CD4-positive, alpha-beta T cell (primary cell): ENCODE measurements at regions of chr13 and their contacts with region 1.

Region 1: GRCh38 chr13:110225609-110226562 is 81.1 kb downstream of the COL4A1 start:
- DNase-seq: no peak
- ATAC-seq: no peak
- H3K4me3 ChIP-seq: no peak overlapping the region
- H3K4me3 Mint-ChIP-seq: no peak overlapping the region
- H3K27ac ChIP-seq: no peak overlapping the region
- H3K27ac Mint-ChIP-seq: no peak overlapping the region
- H3K4me1 ChIP-seq: no peaks in the 10 kb centered on the region
- H3K4me1 Mint-ChIP-seq: no peaks in the 10 kb centered on the region
- H3K27me3 ChIP-seq: peaks cover 0 to 3% of the 10 kb centered on the region in 2 experiments
- H3K27me3 Mint-ChIP-seq: peaks cover 18% of the 10 kb centered on the region
- CTCF ChIP-seq: no peak

Region 2: DNA sequence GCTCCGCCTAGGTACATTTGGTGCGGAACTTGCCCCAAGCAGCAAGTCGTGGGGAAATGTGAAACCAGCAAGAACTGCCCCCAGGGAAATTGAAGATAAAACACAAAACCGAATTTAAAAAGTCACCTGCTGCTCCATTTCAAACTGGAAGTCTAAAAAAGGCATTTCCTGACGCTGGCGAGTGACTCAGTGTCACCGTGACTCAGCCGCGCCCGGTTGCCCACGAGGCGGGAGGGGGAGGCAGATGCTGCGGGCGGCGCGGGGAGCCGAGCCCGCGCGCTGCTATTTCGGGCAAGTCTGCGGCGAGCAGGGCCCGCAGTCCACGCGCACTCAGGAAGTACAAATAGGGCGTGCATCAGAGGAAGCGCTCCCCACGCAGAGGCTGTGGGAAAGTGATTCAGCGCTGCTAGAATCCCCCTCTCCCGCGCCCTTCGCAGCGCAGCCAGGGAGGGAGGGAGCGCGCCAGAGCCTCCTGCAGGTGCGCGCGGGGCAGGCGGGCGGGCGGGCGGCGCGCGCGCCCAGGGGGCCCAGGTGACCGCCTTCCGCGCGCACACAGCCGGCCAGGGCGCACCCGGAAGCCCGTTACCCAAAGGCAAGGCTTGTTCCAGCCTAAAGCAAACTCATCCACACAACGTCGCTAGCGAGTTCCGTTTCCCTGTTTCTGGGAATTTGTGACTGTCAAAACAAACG is 87.7 kb before region 1 on chr13:
- CTCF ChIA-PET with region 1: no interaction called
- POLR2A ChIA-PET with region 1: no interaction called
- intact Hi-C with region 1: no loop called
- DNase-seq: peak in 11 of 14 experiments; percentile 12 to 79 (median 38)
- ATAC-seq: peak; percentile 66
- H3K4me3 ChIP-seq: peak overlapping the region; percentile 47
- H3K4me3 Mint-ChIP-seq: peak overlapping the region; percentile 77
- H3K27ac ChIP-seq: no peak overlapping the region
- H3K27ac Mint-ChIP-seq: no peak overlapping the region
- H3K4me1 ChIP-seq: peaks cover 18% of the 10 kb centered on the region
- H3K4me1 Mint-ChIP-seq: peaks cover 12% of the 10 kb centered on the region
- H3K27me3 ChIP-seq: peaks cover 13 to 24% of the 10 kb centered on the region in 2 experiments
- H3K27me3 Mint-ChIP-seq: peaks cover 45% of the 10 kb centered on the region
- CTCF ChIP-seq: no peak

Region 3: DNA sequence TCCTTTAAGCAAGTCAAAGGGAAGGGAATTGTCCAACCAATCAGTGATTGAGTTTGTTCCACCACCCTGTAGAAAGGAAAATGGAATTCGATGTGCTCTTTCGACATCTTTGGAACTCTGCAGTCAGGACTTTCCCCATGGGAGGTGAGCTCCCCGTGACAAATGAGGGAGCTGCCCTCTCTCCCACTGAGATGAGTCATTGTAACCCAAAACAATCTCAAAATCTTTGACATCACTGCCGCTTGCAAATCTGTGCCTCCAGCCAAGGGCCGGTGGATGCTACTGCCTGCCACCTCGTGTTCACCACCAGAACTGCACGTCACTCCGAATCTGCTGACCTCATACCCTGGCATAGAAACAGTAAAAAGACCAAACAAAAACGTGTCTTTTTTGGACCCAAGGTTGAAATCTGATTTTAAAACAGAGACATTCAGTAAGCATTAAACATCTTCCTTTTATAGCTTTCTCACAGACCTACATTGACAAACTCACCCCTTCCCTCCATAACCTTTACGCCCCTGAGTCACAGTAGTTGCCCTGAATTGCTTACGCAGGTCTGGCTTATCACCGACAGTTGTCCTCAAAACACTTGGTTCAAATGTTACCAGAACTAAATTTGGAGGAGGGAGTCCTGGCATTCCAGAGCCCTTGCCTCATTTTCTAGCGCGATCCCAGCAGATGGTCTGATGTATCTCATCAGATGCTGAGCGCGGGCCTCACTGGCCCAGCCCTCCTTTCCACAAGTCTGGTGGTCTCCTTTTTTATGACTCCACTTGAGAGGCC is 186.4 kb after region 1 on chr13:
- CTCF ChIA-PET with region 1: no interaction called
- POLR2A ChIA-PET with region 1: no interaction called
- intact Hi-C with region 1: loop called (anchors 1 kb)
- DNase-seq: peak; percentile 21 to 73 (median 44)
- ATAC-seq: peak; percentile 54
- H3K4me3 ChIP-seq: no peak overlapping the region
- H3K4me3 Mint-ChIP-seq: no peak overlapping the region
- H3K27ac ChIP-seq: no peak overlapping the region
- H3K27ac Mint-ChIP-seq: no peak overlapping the region
- H3K4me1 ChIP-seq: peaks cover 5% of the 10 kb centered on the region
- H3K4me1 Mint-ChIP-seq: no peaks in the 10 kb centered on the region
- H3K27me3 ChIP-seq: peaks cover 18 to 35% of the 10 kb centered on the region in 2 experiments
- H3K27me3 Mint-ChIP-seq: peaks cover 83% of the 10 kb centered on the region
- CTCF ChIP-seq: peak; percentile 80